Activated B cell treated with CpG ODN at 0.5 μM for 24 hours (primary cell): ENCODE measurements at regions of chr13 and their contacts with region 1.

Region 1: GRCh38 chr13:99501184-99501847 is at the start of gene TM9SF2:
- DNase-seq: peak; percentile 98
- ATAC-seq: peak; percentile 61
- H3K4me3 Mint-ChIP-seq: peak within 1 kb of the TSS; percentile 97
- H3K27ac Mint-ChIP-seq: peak within 1 kb of the TSS; percentile 97
- H3K4me1 Mint-ChIP-seq: peaks cover 84% of the 10 kb centered on the region
- H3K27me3 Mint-ChIP-seq: no peaks in the 10 kb centered on the region
- CTCF ChIP-seq: no peak
- total RNA-seq, gene TM9SF2: 68.1 and 76.0 TPM in 2 replicates

Region 2: GRCh38 chr13:99200432-99201167 is 300.7 kb before region 1 on chr13 and contains the start of gene UBAC2:
- CTCF ChIA-PET with region 1: no interaction called
- POLR2A ChIA-PET with region 1: interaction called, 3 read pairs
- intact Hi-C with region 1: loop called (anchors 1 kb)
- DNase-seq: peak; percentile 98
- ATAC-seq: peak; percentile 74
- H3K4me3 Mint-ChIP-seq: peak within 1 kb of the TSS; percentile 95
- H3K27ac Mint-ChIP-seq: peak within 1 kb of the TSS; percentile 94
- H3K4me1 Mint-ChIP-seq: peaks cover 59% of the 10 kb centered on the region
- H3K27me3 Mint-ChIP-seq: no peaks in the 10 kb centered on the region
- CTCF ChIP-seq: no peak
- total RNA-seq, gene UBAC2: 40.6 and 51.0 TPM in 2 replicates

Region 3: GRCh38 chr13:99425485-99426341 is 75.6 kb before region 1 on chr13:
- CTCF ChIA-PET with region 1: no interaction called
- POLR2A ChIA-PET with region 1: interaction called, 6 read pairs
- intact Hi-C with region 1: loop called (anchors 2 kb)
- DNase-seq: peak; percentile 56
- ATAC-seq: peak; percentile 53
- H3K4me3 Mint-ChIP-seq: peak overlapping the region; percentile 71
- H3K27ac Mint-ChIP-seq: peak overlapping the region; percentile 93
- H3K4me1 Mint-ChIP-seq: peaks cover 89% of the 10 kb centered on the region
- H3K27me3 Mint-ChIP-seq: no peaks in the 10 kb centered on the region
- CTCF ChIP-seq: no peak

Region 4: GRCh38 chr13:99516153-99516929 is 15.0 kb after region 1 on chr13:
- CTCF ChIA-PET with region 1: interaction called, 6 read pairs
- POLR2A ChIA-PET with region 1: interaction called, 3 read pairs
- intact Hi-C with region 1: loop called (anchors 1 kb)
- DNase-seq: no peak
- ATAC-seq: no peak
- H3K4me3 Mint-ChIP-seq: no peak overlapping the region
- H3K27ac Mint-ChIP-seq: peak overlapping the region; percentile 12
- H3K4me1 Mint-ChIP-seq: peaks cover 53% of the 10 kb centered on the region
- H3K27me3 Mint-ChIP-seq: no peaks in the 10 kb centered on the region
- CTCF ChIP-seq: no peak

Region 5: GRCh38 chr13:100588331-100589177 is 1087.2 kb after region 1 on chr13 and contains the start of gene GGACT:
- CTCF ChIA-PET with region 1: no interaction called
- POLR2A ChIA-PET with region 1: no interaction called
- intact Hi-C with region 1: loop called (anchors 2 kb)
- DNase-seq: peak; percentile 80
- ATAC-seq: peak; percentile 95
- H3K4me3 Mint-ChIP-seq: peak within 1 kb of the TSS; percentile 80
- H3K27ac Mint-ChIP-seq: peak within 1 kb of the TSS; percentile 65
- H3K4me1 Mint-ChIP-seq: peaks cover 14% of the 10 kb centered on the region
- H3K27me3 Mint-ChIP-seq: no peaks in the 10 kb centered on the region
- CTCF ChIP-seq: no peak
- total RNA-seq, gene GGACT: 6.5 and 7.5 TPM in 2 replicates

Region 6: DNA sequence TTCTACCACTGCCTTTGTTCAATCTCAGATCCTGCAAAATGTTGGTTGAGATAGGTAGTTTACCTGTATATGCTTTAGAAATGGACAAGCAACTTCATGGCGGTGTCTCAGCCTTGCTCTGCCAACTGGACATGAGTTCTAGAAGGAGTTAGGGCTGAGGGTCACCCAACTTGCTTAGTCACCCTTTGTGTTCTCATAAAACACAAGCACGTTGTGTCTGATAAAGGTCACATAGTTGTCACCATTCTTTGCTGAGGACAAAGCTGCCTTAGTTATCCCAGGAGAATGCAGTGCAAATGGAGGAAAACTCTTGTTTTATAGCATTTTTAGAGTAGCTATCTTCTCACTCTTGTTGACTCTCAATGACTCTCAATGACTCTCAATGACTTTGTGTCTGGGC is 1391.7 kb after region 1 on chr13:
- CTCF ChIA-PET with region 1: no interaction called
- POLR2A ChIA-PET with region 1: no interaction called
- intact Hi-C with region 1: no loop called
- DNase-seq: no peak
- ATAC-seq: no peak
- H3K4me3 Mint-ChIP-seq: no peak overlapping the region
- H3K27ac Mint-ChIP-seq: no peak overlapping the region
- H3K4me1 Mint-ChIP-seq: no peaks in the 10 kb centered on the region
- H3K27me3 Mint-ChIP-seq: no peaks in the 10 kb centered on the region
- CTCF ChIP-seq: no peak